Aorta (tissue), 5 donors: ENCODE measurements at regions of chr17 and their contacts with region 1.

Region 1: DNA sequence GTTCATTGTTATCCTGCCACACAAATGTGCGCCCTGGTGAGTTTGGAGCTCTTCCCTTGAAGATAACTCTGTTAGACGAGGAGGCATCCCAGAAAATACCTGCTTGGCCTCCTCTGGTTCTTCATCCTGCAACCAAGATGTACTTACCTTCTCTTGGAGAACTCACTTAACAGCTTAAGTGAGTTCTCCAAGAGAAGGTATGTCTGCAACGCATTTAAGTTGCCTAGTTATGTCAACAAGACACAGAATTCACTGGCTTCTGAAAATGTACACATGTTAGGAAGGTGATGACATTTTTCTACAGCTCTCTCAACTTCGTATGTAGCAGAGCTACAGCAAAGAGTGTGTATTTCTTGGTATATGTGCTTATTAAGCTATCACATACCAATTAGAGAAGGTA is 78.6 kb upstream of the NOG start:
- DNase-seq: no peak
- ATAC-seq: no peak
- H3K4me3 ChIP-seq: no peak overlapping the region
- H3K27ac ChIP-seq: no peak overlapping the region
- H3K4me1 ChIP-seq: no peaks in the 10 kb centered on the region
- H3K27me3 ChIP-seq: no peaks in the 10 kb centered on the region

Region 2: DNA sequence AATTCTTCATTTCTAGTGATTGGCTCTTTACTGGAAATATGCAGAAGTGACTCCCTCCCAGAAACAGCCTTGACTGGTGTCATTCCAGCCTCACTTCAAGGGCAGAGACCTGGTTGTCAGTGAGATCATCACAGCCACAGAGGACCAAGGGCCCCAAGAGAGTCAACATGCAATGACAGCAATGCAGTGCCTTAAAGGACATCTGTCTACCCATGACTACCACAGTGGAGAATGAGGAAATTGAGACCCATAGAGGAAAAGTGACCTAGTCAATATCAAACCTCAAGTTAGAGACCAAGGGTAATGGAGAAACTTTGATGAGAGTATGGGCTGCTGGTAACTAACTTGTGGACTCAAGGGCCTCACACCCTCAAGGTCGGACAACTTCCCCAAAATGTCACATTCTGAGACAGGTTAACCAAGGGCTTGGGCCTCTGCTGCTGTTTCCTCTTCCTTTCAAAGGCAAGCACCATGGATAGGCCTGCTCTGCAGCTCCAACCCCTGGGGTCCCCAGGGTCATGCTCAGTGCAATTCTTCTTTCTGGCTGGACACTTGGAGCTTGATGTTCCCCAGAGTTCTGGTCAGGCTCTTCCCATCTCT is 89.9 kb after region 1 on chr17:
- intact Hi-C with region 1: no loop called
- DNase-seq: no peak
- ATAC-seq: no peak
- H3K4me3 ChIP-seq: no peak overlapping the region
- H3K27ac ChIP-seq: no peak overlapping the region
- H3K4me1 ChIP-seq: no peaks in the 10 kb centered on the region
- H3K27me3 ChIP-seq: no peaks in the 10 kb centered on the region

Region 3: GRCh38 chr17:56652606-56653005 is 137.7 kb after region 1 on chr17:
- intact Hi-C with region 1: no loop called
- DNase-seq: no peak
- ATAC-seq: no peak
- H3K4me3 ChIP-seq: no peak overlapping the region
- H3K27ac ChIP-seq: no peak overlapping the region
- H3K4me1 ChIP-seq: no peaks in the 10 kb centered on the region
- H3K27me3 ChIP-seq: no peaks in the 10 kb centered on the region

Region 4: DNA sequence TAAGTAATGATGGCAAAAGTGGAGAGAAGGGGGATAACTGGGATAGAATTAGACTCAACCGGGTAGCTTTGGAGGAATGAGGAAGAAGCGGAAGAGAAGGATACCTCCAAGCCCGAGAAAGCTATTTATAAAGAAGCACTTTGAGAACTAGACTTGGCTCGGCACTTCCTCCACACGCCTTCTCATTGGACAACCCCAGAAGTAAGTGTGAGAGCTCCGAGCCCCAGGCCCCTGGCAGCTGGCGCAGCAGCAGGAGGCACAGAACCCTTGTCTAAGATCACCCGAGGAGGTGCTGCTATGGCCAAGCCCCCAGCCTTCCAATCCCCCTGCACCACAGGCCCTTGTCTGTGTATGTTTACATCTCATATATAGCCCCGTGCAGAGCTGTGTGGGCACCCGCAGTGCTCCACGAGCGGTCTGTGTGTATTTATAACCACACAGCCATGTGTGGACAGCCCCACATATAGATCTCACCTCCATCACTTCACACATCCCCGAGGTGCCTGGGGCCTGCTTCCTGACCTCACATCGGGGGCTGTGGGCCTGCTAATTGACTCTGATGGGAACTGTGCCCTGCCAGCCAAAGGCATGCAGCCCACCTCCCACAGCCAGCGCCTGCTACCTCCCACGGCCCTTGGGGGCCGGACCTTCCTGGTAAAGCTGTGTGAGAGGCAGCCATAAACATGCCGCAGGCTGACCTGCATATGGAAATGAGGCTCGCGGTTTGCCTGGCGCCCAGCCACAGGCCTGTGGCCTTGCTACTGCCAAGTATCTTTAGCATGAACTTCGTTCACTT is 222.7 kb after region 1 on chr17:
- intact Hi-C with region 1: loop called in 1 of 2 experiments (anchors 5 kb)
- DNase-seq: no peak
- ATAC-seq: peak; percentile 36
- H3K4me3 ChIP-seq: no peak overlapping the region
- H3K27ac ChIP-seq: no peak overlapping the region
- H3K4me1 ChIP-seq: no peaks in the 10 kb centered on the region
- H3K27me3 ChIP-seq: no peaks in the 10 kb centered on the region